Activated CD8-positive, alpha-beta memory T cell treated with anti-CD3 and anti-CD28 coated beads, Interleukin-2, amount 10 ng/mL, durations not matched to agents 7 days and 5 days (primary cell): ENCODE measurements at regions of chr1 and their contacts with region 1.

Region 1: GRCh38 chr1:231931846-231932454 is 305.4 kb downstream of the DISC1 start:
- DNase-seq: no peak
- ATAC-seq: no peak
- H3K4me3 Mint-ChIP-seq: no peak overlapping the region
- H3K27ac Mint-ChIP-seq: no peak overlapping the region
- H3K4me1 Mint-ChIP-seq: no peaks in the 10 kb centered on the region
- H3K27me3 Mint-ChIP-seq: no peaks in the 10 kb centered on the region

Region 2: DNA sequence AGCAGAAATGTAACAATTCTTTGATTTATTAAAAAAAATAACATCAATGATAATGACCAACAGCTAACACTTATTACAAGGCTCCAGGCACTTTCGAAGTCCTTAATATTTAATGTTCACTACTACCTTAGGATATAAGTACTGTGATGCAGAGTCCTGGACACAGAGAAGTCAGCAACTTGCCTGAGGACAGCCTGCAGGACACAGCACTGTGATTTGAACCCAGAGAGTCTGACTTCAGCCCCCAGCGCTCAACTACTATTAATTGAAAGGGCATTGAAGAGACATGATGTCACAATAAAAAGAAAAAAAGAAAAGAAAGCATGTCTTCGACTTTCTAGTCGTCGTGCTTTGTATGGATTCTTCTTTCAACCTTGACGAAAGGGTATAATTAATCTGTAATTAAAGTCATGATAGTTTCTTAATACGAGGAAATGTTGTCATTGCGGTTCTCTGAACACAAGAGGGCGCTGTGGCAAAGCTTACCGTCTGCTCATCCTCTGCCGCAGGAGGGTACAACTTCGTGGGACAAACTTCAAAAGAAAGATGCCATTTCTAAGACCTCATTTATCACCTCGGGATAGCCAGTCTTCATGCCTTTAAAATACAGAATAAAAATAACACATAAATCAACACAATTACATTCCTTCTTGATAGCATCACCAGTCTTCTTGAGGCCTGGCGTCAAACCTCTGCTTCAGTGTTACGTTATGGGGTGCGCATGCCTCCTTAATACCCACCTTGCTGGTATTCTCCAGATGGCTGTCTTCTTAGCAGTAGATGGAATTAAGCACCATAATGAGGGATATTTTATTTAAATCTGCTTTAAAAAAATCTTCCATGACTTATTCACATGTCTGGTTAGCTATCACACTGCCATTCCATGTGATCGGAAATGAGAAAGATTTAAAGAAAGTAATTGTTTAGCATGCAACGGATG is 65.3 kb before region 1 on chr1:
- CTCF ChIA-PET with region 1: interaction called, 12 read pairs
- DNase-seq: peak; percentile 61
- ATAC-seq: no peak
- H3K4me3 Mint-ChIP-seq: no peak overlapping the region
- H3K27ac Mint-ChIP-seq: no peak overlapping the region
- H3K4me1 Mint-ChIP-seq: peaks cover 10% of the 10 kb centered on the region
- H3K27me3 Mint-ChIP-seq: no peaks in the 10 kb centered on the region

Region 3: DNA sequence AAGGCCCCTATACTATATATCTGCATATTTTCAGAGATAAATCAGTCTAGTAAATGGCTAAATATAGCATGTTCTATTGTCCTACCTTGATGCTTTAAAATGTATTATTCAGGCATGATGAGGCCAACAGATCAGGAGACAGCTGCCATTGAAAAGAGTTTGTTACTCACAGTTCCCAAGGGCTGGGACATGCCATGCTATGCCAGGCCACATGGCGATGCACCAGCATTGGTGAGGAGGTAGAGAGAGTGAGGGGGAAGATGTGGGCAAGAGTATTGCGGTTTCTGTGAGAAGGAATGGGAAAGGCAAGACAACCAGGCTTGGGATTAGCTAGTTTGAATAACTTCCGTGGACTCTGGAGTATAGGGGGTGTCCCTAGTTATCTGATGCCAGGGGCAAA is 11.1 kb after region 1 on chr1:
- CTCF ChIA-PET with region 1: interaction called, 12 read pairs
- DNase-seq: no peak
- ATAC-seq: no peak
- H3K4me3 Mint-ChIP-seq: no peak overlapping the region
- H3K27ac Mint-ChIP-seq: no peak overlapping the region
- H3K4me1 Mint-ChIP-seq: no peaks in the 10 kb centered on the region
- H3K27me3 Mint-ChIP-seq: no peaks in the 10 kb centered on the region

Region 4: DNA sequence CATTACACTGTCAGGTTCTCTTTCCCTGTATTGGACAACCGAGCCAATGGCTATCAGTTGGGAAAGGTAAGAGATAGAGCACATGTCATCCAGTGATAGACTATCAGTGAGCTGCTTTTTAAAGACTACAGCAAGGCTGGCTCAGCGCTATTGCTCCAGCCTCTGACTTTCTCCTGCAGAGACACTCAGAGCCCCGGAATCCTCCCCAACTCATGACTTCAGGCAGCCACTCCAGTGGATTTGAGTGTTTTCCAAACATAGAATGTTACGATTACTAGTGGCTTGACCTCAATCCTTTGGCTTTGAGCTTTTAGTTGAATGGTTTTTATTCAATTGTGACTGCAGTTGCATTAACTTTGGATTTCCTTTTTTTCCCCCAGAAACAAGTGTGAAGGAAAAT is 26.5 kb after region 1 on chr1:
- CTCF ChIA-PET with region 1: no interaction called
- DNase-seq: no peak
- ATAC-seq: no peak
- H3K4me3 Mint-ChIP-seq: no peak overlapping the region
- H3K27ac Mint-ChIP-seq: no peak overlapping the region
- H3K4me1 Mint-ChIP-seq: no peaks in the 10 kb centered on the region
- H3K27me3 Mint-ChIP-seq: no peaks in the 10 kb centered on the region